T-cell (primary cell): ENCODE measurements at regions of chr12 and their contacts with region 1.

Region 1: DNA sequence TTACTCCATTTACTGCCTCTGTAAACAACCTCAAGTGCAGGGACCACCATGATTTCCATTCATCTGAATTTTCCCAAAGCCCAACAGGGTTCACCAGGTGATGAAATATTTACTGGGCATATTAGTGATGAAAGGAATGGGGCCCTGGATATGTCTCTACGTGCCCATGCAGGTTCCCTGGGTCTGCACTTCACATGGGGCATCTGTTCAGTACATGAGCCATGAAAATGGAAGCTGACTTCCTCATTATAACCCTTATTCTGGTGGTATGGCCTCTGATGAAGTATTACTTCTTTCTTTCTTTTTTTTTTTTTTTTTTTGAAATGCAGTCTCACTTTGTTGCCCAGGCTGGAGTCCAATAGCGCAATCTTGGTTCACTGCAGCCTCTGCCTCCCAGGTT is 26.5 kb upstream of the CORO1C start:
- DNase-seq: no peak
- ATAC-seq: no peak
- H3K4me3 ChIP-seq: no peak overlapping the region
- H3K4me3 Mint-ChIP-seq: no peak overlapping the region
- H3K27ac ChIP-seq: no peak overlapping the region
- H3K27ac Mint-ChIP-seq: no peak overlapping the region
- H3K4me1 ChIP-seq: no peaks in the 10 kb centered on the region
- H3K4me1 Mint-ChIP-seq: no peaks in the 10 kb centered on the region
- H3K27me3 ChIP-seq: no peaks in the 10 kb centered on the region
- H3K27me3 Mint-ChIP-seq: no peaks in the 10 kb centered on the region

Region 2: DNA sequence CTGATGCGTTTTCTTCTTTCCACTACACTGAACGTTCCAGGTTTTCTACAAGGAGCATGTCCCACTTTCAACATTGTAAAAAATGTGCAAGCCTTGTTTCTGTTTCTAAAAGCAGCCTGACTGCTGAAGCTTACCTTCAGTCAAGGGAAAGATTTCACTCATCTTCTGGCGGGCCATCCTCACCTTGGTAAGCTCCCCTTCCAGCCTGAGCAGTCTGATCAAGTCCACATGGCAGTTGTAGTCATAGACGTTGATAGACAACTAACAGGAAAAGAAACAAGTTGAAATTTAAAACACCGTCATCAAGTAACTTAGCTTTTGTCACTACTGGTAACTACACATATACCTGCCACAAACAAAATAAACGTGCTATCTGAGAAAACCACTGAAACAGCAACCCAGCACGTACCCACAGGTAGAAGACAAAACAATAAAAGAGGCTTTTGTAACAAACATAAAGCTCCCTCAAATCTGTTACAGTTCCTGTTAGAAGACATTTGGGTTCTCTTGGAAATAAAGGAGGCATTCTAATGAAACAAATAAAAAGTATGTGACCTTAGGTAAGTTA is 208.8 kb before region 1 on chr12:
- CTCF ChIA-PET with region 1: no interaction called
- POLR2A ChIA-PET with region 1: interaction called in 1 of 2 experiments, 10 read pairs
- DNase-seq: no peak
- ATAC-seq: no peak
- H3K4me3 ChIP-seq: no peak overlapping the region
- H3K4me3 Mint-ChIP-seq: no peak overlapping the region
- H3K27ac ChIP-seq: no peak overlapping the region
- H3K27ac Mint-ChIP-seq: peak overlapping the region in 1 of 2 donors; percentile 23
- H3K4me1 ChIP-seq: peaks cover 0 to 4% of the 10 kb centered on the region in 2 experiments
- H3K4me1 Mint-ChIP-seq: peaks cover 50 to 51% (median 51%) of the 10 kb centered on the region in 3 donors
- H3K27me3 ChIP-seq: no peaks in the 10 kb centered on the region
- H3K27me3 Mint-ChIP-seq: no peaks in the 10 kb centered on the region